B cell (primary cell): ENCODE measurements at regions of chr21 and their contacts with region 1.

Region 1: GRCh38 chr21:36156339-36156814 is 247 bp upstream of the DOP1B start:
- DNase-seq: peak; percentile 100
- ATAC-seq: peak; percentile 88
- H3K4me3 ChIP-seq: peak overlapping the region in 4 of 5 experiments; percentile 63 to 88 (median 80)
- H3K4me3 Mint-ChIP-seq: peak overlapping the region; percentile 86
- H3K27ac ChIP-seq: peak overlapping the region; percentile 81 to 85
- H3K27ac Mint-ChIP-seq: peak overlapping the region; percentile 78
- H3K4me1 ChIP-seq: peaks cover 14 to 30% of the 10 kb centered on the region in 2 donors
- H3K4me1 Mint-ChIP-seq: peaks cover 35% of the 10 kb centered on the region
- H3K27me3 ChIP-seq: no peaks in the 10 kb centered on the region
- H3K27me3 Mint-ChIP-seq: no peaks in the 10 kb centered on the region
- CTCF ChIP-seq: no peak

Region 2: GRCh38 chr21:35905096-35905962 is 251.0 kb before region 1 on chr21:
- CTCF ChIA-PET with region 1: no interaction called
- POLR2A ChIA-PET with region 1: no interaction called
- intact Hi-C with region 1: no loop called
- DNase-seq: no peak
- ATAC-seq: no peak
- H3K4me3 ChIP-seq: no peak overlapping the region
- H3K4me3 Mint-ChIP-seq: no peak overlapping the region
- H3K27ac ChIP-seq: no peak overlapping the region
- H3K27ac Mint-ChIP-seq: no peak overlapping the region
- H3K4me1 ChIP-seq: no peaks in the 10 kb centered on the region
- H3K4me1 Mint-ChIP-seq: no peaks in the 10 kb centered on the region
- H3K27me3 ChIP-seq: peaks cover 0 to 4% (median 0%) of the 10 kb centered on the region in 4 experiments
- H3K27me3 Mint-ChIP-seq: peaks cover 25% of the 10 kb centered on the region
- CTCF ChIP-seq: no peak

Region 3: DNA sequence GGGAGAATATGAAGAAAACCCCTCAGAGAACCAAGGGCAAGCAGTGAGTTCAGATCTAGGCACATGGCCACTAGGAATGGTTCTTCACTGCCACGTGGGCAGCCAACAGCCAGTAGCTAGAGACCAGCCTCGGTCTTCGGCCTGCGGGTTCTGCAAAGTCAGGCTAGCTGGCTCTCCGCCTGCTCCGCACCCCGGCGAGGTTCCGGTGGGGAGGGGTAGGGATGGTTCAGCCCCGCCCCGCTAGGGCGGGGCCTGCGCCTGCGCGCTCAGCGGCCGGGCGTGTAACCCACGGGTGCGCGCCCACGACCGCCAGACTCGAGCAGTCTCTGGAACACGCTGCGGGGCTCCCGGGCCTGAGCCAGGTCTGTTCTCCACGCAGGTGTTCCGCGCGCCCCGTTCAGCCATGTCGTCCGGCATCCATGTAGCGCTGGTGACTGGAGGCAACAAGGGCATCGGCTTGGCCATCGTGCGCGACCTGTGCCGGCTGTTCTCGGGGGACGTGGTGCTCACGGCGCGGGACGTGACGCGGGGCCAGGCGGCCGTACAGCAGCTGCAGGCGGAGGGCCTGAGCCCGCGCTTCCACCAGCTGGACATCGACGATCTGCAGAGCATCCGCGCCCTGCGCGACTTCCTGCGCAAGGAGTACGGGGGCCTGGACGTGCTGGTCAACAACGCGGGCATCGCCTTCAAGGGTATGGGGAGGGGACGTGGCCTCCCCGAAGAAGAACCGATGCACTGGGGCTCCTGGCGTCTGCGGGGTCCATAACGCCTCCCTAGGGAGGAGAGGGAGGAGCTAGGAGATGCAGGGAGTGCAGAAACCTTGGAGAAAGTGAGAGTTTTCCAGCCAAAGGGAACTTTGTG is 86.4 kb before region 1 on chr21 and contains the start of gene CBR1:
- CTCF ChIA-PET with region 1: no interaction called
- POLR2A ChIA-PET with region 1: no interaction called
- intact Hi-C with region 1: loop called (anchors 1 kb)
- DNase-seq: peak; percentile 91
- ATAC-seq: peak; percentile 98
- H3K4me3 ChIP-seq: peak within 1 kb of the TSS; percentile 0 to 77 (median 71)
- H3K4me3 Mint-ChIP-seq: peak within 1 kb of the TSS; percentile 94
- H3K27ac ChIP-seq: peak within 1 kb of the TSS; percentile 45 to 51
- H3K27ac Mint-ChIP-seq: peak within 1 kb of the TSS; percentile 87
- H3K4me1 ChIP-seq: peaks cover 11 to 20% of the 10 kb centered on the region in 2 donors
- H3K4me1 Mint-ChIP-seq: peaks cover 31% of the 10 kb centered on the region
- H3K27me3 ChIP-seq: no peaks in the 10 kb centered on the region
- H3K27me3 Mint-ChIP-seq: no peaks in the 10 kb centered on the region
- CTCF ChIP-seq: no peak
- total RNA-seq, gene CBR1: 13.5 and 14.4 TPM in 2 replicates

Region 4: GRCh38 chr21:36125512-36126222 is 30.7 kb before region 1 on chr21:
- CTCF ChIA-PET with region 1: no interaction called
- POLR2A ChIA-PET with region 1: no interaction called
- intact Hi-C with region 1: no loop called
- DNase-seq: peak; percentile 69
- ATAC-seq: peak; percentile 52
- H3K4me3 ChIP-seq: no peak overlapping the region
- H3K4me3 Mint-ChIP-seq: no peak overlapping the region
- H3K27ac ChIP-seq: no peak overlapping the region
- H3K27ac Mint-ChIP-seq: no peak overlapping the region
- H3K4me1 ChIP-seq: peaks cover 3 to 9% of the 10 kb centered on the region in 2 donors
- H3K4me1 Mint-ChIP-seq: peaks cover 12% of the 10 kb centered on the region
- H3K27me3 ChIP-seq: no peaks in the 10 kb centered on the region
- H3K27me3 Mint-ChIP-seq: no peaks in the 10 kb centered on the region
- CTCF ChIP-seq: peak; percentile 95

Region 5: DNA sequence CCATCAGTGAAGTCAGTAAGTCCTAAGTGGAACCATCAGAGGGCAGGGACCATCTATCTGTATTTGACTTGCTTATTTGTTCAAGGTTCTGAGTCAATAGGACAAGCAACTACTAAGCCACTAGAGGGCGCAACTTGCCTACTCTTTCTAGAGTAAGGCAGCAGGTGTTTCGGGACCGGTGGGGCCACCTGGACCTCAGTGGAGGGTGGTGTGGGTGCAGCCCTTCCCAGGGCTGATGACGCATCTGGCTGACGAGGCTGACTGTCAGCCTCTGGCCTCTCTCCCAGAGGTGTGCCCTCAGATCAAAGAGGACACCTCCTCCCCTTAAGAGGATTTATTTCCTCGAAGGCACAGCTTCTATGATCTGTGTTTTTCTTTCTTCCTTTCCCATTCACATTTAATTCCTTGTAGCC is 14.9 kb before region 1 on chr21:
- CTCF ChIA-PET with region 1: interaction called, 64 read pairs
- POLR2A ChIA-PET with region 1: interaction called, 6 read pairs
- intact Hi-C with region 1: loop called (anchors 1 kb)
- DNase-seq: peak; percentile 93
- ATAC-seq: peak; percentile 95
- H3K4me3 ChIP-seq: no peak overlapping the region
- H3K4me3 Mint-ChIP-seq: no peak overlapping the region
- H3K27ac ChIP-seq: peak overlapping the region in 1 of 2 donors; percentile 18
- H3K27ac Mint-ChIP-seq: no peak overlapping the region
- H3K4me1 ChIP-seq: peaks cover 19 to 29% of the 10 kb centered on the region in 2 donors
- H3K4me1 Mint-ChIP-seq: peaks cover 24% of the 10 kb centered on the region
- H3K27me3 ChIP-seq: no peaks in the 10 kb centered on the region
- H3K27me3 Mint-ChIP-seq: no peaks in the 10 kb centered on the region
- CTCF ChIP-seq: peak; percentile 93

Region 6: GRCh38 chr21:36171741-36172331 is 15.5 kb after region 1 on chr21:
- CTCF ChIA-PET with region 1: no interaction called
- POLR2A ChIA-PET with region 1: no interaction called
- intact Hi-C with region 1: no loop called
- DNase-seq: no peak
- ATAC-seq: no peak
- H3K4me3 ChIP-seq: no peak overlapping the region
- H3K4me3 Mint-ChIP-seq: no peak overlapping the region
- H3K27ac ChIP-seq: no peak overlapping the region
- H3K27ac Mint-ChIP-seq: peak overlapping the region; percentile 58
- H3K4me1 ChIP-seq: peaks cover 4 to 12% of the 10 kb centered on the region in 2 donors
- H3K4me1 Mint-ChIP-seq: peaks cover 19% of the 10 kb centered on the region
- H3K27me3 ChIP-seq: no peaks in the 10 kb centered on the region
- H3K27me3 Mint-ChIP-seq: no peaks in the 10 kb centered on the region
- CTCF ChIP-seq: no peak

Region 7: GRCh38 chr21:36319765-36320420 is 163.5 kb after region 1 on chr21 and contains the start of gene MORC3:
- CTCF ChIA-PET with region 1: interaction called, 6 read pairs
- POLR2A ChIA-PET with region 1: interaction called, 7 read pairs
- intact Hi-C with region 1: loop called (anchors 1 kb)
- DNase-seq: peak; percentile 99
- ATAC-seq: peak; percentile 87
- H3K4me3 ChIP-seq: peak within 1 kb of the TSS; percentile 69 to 98 (median 94)
- H3K4me3 Mint-ChIP-seq: peak within 1 kb of the TSS; percentile 97
- H3K27ac ChIP-seq: peak within 1 kb of the TSS; percentile 86 to 92
- H3K27ac Mint-ChIP-seq: peak within 1 kb of the TSS; percentile 98
- H3K4me1 ChIP-seq: peaks cover 30 to 39% of the 10 kb centered on the region in 2 donors
- H3K4me1 Mint-ChIP-seq: peaks cover 54% of the 10 kb centered on the region
- H3K27me3 ChIP-seq: no peaks in the 10 kb centered on the region
- H3K27me3 Mint-ChIP-seq: no peaks in the 10 kb centered on the region
- CTCF ChIP-seq: no peak
- total RNA-seq, gene MORC3: 104 and 113 TPM in 2 replicates

Region 8: DNA sequence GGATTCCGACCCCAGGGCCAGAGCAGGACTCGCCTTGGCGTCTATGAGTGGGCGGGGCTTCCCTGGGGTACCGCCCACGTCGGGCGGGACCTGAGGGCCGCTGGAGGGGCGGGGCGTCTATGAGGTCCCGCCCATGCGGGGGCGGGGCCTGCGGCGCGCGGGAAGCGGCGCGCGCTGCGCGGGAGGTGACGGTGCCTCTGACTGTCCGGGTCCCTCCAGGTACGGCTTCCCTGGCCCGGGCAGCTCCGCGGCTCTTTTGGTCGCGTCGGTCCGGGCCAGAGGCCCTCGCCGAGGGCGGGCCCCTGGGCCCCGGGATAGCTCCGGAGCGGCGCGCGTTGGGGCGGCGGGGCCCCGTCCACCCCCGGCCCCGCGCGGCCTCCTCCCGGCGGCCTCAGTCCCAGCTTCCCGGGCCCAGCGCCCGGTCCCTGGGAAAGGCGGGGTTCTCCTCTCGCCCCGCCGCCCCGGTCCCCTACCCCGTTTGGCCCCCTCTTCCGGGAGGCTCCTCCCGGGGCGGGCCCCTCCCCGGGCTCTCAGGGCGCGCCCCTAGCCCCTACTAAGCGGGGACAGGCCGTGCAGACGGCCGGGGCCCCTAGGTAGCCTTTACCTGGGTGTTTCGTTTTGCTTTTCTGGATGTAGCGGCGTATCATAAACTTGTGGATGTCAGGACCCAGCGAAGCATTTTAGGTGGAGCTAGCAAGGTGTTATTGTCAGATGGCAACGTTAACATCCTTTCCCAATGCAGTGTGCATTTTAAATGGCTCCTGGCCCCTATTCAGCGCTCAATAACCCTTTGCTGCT is 229.1 kb after region 1 on chr21 and contains the start of gene CHAF1B:
- CTCF ChIA-PET with region 1: no interaction called
- POLR2A ChIA-PET with region 1: no interaction called
- intact Hi-C with region 1: loop called (anchors 1 kb)
- DNase-seq: peak; percentile 87
- ATAC-seq: peak; percentile 98
- H3K4me3 ChIP-seq: peak within 1 kb of the TSS; percentile 53 to 67 (median 57)
- H3K4me3 Mint-ChIP-seq: peak within 1 kb of the TSS; percentile 92
- H3K27ac ChIP-seq: peak within 1 kb of the TSS in 1 of 2 donors; percentile 26
- H3K27ac Mint-ChIP-seq: peak within 1 kb of the TSS; percentile 53
- H3K4me1 ChIP-seq: peaks cover 4 to 9% of the 10 kb centered on the region in 2 donors
- H3K4me1 Mint-ChIP-seq: peaks cover 6% of the 10 kb centered on the region
- H3K27me3 ChIP-seq: no peaks in the 10 kb centered on the region
- H3K27me3 Mint-ChIP-seq: no peaks in the 10 kb centered on the region
- CTCF ChIP-seq: no peak
- total RNA-seq, gene CHAF1B: 1.9 and 2.2 TPM in 2 replicates